Vagina (tissue), 2 donors: ENCODE measurements at regions of chr7 and their contacts with region 1.

Region 1: DNA sequence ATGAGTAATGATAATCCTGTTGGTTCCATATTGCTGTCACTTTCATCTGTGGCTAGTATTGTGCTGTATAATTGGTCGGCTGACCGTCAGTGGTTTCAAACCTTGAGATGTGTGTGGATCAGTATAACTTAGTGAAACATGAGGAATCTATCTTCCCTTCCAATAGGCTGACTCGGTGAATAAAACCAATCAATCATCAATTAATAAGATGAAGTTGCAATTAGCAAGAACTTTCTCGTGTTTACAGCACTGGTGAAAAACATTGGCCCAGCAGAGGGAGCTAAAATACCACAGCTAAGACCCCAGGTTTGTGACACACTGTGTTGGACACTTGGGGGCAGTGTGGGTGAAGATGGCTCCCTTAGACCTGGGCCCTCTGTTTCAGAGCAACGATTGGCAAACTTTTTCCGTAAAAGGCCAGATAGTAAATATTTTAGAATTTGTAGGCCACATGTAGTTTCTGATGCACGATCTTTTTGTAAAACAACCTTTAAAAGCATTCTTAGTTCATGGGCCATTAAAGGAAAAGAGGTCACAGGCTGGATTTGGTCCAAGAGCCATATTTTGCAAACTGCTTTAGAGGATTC is 47.8 kb downstream of the STRA8 start:
- DNase-seq: no peak
- H3K4me3 ChIP-seq: no peak overlapping the region
- H3K27ac ChIP-seq: peak overlapping the region; percentile 48
- H3K4me1 ChIP-seq: peaks cover 6% of the 10 kb centered on the region
- H3K27me3 ChIP-seq: no peaks in the 10 kb centered on the region
- CTCF ChIP-seq: peak; percentile 94 to 99 (median 98)
- POLR2A ChIP-seq: no peak

Region 2: DNA sequence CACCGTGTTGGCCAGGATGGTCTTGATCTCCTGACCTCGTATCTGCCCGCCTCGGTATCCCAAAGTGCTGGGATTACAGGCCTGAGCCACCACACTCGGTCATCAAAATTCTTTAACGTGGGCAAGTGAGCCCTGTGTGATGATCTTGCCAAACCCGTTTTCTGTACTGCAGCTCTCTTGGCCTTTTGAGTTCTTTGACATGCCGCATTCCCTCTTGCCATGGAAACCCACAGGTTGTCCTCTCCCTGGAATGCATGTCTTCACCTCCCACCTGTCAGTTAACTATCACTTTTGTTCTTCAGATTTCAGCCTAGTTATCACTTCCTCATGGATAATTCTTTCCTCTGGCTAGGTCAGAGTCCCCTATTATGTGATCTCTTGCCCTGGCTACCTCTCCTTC is 281.3 kb after region 1 on chr7:
- intact Hi-C with region 1: loop called (anchors 5 kb)
- DNase-seq: no peak
- H3K4me3 ChIP-seq: no peak overlapping the region
- H3K27ac ChIP-seq: no peak overlapping the region
- H3K4me1 ChIP-seq: peaks cover 18% of the 10 kb centered on the region
- H3K27me3 ChIP-seq: no peaks in the 10 kb centered on the region
- CTCF ChIP-seq: no peak
- POLR2A ChIP-seq: no peak